Cardiac septum (tissue), 1 donor: ENCODE measurements at regions of chr1 and their contacts with region 1.

Region 1: DNA sequence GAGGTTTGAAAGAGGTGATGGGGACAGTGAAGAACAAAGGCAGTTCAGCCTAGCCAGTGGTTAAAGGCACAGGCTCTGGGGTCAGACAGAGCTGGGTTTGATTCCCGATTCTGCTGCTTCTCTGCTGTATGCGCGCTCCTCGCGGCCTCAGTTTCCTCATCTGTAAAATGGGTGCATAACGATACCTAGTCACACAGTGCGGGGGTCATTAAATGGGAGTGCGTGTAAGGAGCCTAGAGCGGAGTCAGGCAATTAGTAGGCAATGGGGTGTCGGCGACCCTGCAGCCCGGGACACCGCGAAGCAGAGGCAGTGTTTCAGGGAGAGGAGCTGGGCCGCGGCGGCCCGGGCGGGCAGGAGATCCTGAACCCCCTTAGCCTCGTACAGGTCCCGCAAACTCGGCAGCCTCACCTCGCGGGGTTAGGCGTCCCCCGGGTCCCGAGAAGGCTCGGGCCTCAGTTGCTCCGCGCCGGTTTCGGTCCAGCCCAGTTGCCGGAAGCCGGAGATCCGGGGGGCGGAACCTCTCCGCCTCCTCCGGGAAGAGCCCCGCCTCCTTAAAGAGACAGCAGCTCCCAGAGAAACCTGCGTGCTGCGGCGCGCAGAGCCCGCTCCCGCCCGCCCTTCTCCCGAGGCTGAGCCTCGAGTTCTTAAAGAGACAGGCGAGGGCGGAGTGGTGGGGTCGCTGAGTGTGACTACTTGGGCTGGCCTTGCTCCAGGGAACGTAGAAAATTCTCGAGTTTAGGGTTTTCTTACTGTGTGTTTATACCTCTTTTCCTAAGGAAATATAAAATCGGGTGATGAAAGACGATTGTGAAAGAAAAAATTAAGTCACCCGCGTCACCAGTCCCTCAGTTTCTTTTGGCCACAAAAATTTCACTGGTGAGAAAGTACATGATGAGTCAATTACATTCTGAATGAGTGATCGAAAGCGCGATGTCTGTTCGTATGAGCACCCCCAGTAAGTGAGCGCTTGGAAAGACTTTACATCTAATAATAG is at the start of gene YIPF1:
- DNase-seq: peak; percentile 96
- total RNA-seq, gene YIPF1: 13.4 TPM

Region 2: DNA sequence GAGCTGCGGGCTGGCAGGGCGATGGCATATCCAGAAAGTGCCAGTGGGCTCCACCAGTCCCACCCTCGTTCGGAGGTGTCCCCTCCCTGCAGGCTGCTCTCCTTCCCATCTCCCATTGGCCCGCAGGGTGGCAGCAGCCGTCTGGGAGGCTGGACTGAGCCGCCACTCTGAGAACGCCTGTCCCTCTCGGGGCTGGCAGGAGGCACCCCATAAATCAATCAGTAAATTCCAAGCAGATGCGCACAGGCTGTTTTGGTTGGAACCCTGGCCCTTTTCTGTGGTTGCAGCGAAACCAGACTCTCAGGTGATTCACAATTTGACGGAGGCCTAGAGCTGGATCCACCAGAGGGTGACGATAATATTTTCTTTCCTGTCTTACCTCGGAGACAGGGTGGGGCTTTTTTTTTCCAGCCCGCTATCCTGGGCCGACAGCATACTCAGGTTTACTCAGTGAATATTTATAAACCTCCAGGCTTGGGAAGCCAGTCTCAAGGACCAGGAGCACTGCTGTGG is 250.3 kb before region 1 on chr1:
- intact Hi-C with region 1: no loop called
- DNase-seq: peak; percentile 39

Region 3: DNA sequence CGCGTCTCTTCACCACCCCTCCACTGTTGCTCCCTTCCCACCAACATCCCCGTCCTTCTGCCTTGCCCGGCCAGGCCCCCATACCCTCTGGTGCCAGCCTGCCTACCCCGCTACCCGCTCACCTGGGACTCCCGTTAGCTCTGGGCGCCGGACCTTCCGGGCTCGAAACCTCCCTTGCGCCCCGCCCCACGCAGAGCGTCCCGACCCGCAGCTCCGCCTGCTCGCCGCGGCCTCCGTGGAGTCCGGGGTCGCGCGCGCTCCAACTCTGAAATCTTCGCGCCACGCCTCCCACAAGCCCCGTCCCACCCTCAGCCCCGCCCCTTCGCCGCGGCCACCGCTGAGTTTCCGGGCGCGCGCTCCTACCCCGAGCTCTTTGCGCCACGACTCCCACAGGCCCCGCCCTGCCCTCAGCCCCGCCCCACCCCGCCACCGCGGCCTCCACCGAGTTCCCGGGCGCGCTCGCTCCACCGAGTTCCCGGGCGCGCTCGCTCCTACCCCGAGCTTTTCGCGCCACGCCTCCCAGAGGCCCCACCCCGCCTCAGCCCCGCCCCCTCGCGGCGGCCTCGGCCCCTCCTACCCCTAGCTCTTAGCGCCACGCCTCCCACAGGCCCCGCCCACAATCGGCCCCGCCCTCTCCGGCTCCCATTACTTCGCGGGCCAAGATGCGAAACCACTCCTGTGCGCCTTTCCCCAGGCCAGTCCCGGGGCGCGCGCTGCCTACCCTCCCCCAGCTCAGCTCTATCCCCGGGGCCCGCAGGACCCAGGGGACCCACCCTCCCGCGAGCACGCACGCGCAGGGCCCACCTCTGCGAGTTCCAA is 56.0 kb after region 1 on chr1 and contains the start of gene IFT25:
- intact Hi-C with region 1: loop called (anchors 1 kb)
- DNase-seq: peak; percentile 99
- total RNA-seq, gene IFT25: 11.1 TPM